ENCODE measurements at regions of chr11 and their contacts with region 1.

Region 1: DNA sequence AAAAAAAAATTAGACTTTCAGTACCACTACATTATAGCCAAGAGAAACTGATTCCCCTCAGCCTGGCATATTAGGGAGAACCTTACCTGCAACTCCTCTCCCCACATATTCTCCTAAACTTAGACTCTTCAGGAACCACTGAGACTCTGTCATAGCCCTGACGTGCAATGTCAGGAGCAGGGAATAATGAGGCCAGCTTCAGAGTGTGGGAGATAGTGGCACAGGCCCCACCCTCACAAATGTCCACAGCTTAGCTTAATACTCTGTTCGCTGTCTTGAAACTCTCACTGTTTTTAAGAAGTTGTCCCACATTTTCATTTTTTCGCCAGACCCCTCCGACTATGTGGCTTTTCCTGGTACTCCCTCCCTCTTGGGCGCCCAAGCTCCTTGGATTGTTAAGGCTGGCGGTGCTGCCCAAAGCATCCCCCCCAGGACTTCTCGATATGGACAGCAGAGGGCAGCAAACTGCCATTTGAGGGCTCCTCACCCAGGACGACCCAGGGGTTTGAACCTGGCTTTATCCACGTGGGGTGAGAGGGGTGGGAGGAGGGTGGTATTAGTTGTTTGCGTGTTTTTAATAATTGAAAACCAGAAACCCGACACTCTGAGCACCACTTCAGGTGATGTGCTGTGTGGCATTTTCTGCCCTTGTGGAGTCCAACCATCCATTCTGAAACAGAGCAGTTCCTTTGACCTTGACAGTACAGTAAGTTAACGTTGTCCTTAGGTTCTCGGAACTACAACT is 45.2 kb upstream of the RASSF10 start:
- DNase-seq: peak; percentile 49 to 92
- H3K4me3 ChIP-seq: no peak overlapping the region
- H3K27ac ChIP-seq: no peak overlapping the region
- H3K4me1 ChIP-seq: peaks cover 0 to 2% (median 0%) of the 10 kb centered on the region in 4 experiments; a peak in 1 of 7 replicates
- H3K27me3 ChIP-seq: no peaks in the 10 kb centered on the region
- CTCF ChIP-seq: peak; percentile 66 to 90 (median 79)
- EP300 ChIP-seq: no peak
- POLR2A ChIP-seq: no peak
- RAD21 ChIP-seq: peak; percentile 96 to 98

Region 2: DNA sequence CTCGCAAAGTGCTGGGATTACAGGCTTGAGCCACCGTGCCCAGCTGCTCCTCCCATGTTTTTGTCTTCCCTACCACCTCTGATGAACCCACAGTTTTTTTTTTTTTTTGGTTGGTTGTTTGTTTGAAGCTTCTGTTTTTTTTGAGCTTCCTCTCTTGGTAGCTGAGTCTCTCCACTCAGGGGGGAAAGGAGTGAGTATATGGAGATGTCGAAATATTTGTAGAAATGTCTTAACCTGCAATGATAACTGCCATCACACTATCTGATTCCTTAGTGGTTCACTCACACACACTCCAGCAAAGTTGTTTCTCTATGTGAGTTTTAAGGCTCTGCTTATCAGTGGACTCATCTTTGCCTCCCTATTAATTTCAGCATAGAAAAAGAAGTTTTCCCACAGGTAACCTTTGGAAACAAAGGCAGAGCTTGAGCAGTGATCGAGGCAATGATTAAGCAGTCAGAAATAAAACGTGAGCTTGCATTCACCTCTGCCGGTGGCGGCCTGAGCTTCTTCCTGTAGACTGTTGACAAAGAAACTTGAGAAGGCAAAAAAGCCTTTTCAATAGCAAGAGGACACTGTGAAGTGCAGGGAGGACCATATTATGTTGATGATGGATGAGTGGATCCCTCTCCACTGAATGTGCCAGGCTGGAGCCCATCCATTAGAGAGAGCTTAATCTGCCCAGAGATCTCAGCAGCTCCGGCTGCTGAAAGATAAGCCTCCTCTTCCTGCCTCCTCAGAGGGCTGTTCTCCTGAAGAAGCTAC is 16.1 kb after region 1 on chr11:
- CTCF ChIA-PET with region 1: interaction called, 116 read pairs
- POLR2A ChIA-PET with region 1: no interaction called
- DNase-seq: no peak
- H3K4me3 ChIP-seq: no peak overlapping the region
- H3K27ac ChIP-seq: no peak overlapping the region
- H3K4me1 ChIP-seq: no peaks in the 10 kb centered on the region
- H3K27me3 ChIP-seq: no peaks in the 10 kb centered on the region
- CTCF ChIP-seq: no peak
- EP300 ChIP-seq: no peak
- POLR2A ChIP-seq: no peak
- RAD21 ChIP-seq: no peak

Region 3: GRCh38 chr11:13152736-13153533 is 189.0 kb after region 1 on chr11:
- CTCF ChIA-PET with region 1: interaction called, 158 read pairs
- POLR2A ChIA-PET with region 1: no interaction called
- DNase-seq: no peak
- H3K4me3 ChIP-seq: no peak overlapping the region
- H3K27ac ChIP-seq: no peak overlapping the region
- H3K4me1 ChIP-seq: no peaks in the 10 kb centered on the region
- H3K27me3 ChIP-seq: no peaks in the 10 kb centered on the region
- CTCF ChIP-seq: peak in 2 of 3 experiments; percentile 37 to 45; a peak in 2 of 4 replicates
- EP300 ChIP-seq: no peak
- POLR2A ChIP-seq: no peak
- RAD21 ChIP-seq: peak; percentile 64 to 68

Region 4: DNA sequence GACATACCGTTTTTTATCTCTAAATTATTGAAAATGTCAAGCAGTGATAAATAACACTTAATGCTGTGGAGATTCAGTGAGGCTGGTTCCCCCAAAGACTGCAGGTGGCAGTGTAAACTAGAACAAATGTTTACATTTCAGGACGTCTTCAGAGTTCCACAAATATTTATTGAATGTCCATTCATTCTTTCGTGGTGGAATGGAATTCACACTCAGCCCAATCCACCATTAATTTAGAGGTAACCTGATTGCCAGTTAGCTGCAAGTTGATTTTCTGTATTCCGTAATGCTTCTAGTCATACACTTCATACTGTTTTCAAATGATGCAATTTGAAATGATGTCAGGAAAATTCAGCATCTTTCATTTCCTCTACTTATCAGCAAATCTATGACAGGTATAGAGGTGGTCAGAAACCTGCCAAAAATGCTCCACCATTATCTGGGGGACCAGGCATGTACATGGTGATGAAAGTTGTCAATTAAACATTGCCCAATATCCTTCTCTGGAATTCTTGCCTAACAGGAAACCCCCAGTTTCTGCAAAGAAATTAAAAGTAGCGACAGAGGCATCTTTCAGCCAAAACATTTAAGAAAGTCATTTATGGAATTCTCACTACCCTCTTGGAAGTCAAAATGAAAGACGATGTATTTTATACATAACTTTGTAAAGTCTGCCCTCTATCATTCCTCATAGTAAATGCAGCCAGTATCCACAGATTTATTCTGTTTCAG is 219.3 kb after region 1 on chr11:
- CTCF ChIA-PET with region 1: interaction called, 20 read pairs
- POLR2A ChIA-PET with region 1: no interaction called
- DNase-seq: no peak
- H3K4me3 ChIP-seq: no peak overlapping the region
- H3K27ac ChIP-seq: no peak overlapping the region
- H3K4me1 ChIP-seq: no peaks in the 10 kb centered on the region
- H3K27me3 ChIP-seq: no peaks in the 10 kb centered on the region
- CTCF ChIP-seq: peak in 2 of 3 experiments; percentile 20 to 45; a peak in 2 of 4 replicates
- EP300 ChIP-seq: no peak
- POLR2A ChIP-seq: no peak
- RAD21 ChIP-seq: peak; percentile 50 to 60

Measured in H1 (cell line).